ENCODE measurements at regions of chr22 and their contacts with region 1.

Region 1: GRCh38 chr22:21876486-21877176 is 9.2 kb upstream of the MAPK1 start:
- DNase-seq: no peak
- H3K4me3 ChIP-seq: no peak overlapping the region
- H3K27ac ChIP-seq: no peak overlapping the region
- H3K4me1 ChIP-seq: no peaks in the 10 kb centered on the region
- H3K27me3 ChIP-seq: no peaks in the 10 kb centered on the region
- CTCF ChIP-seq: no peak
- POLR2A ChIP-seq: no peak

Region 2: GRCh38 chr22:21754523-21754922 is 122.1 kb before region 1 on chr22:
- intact Hi-C with region 1: loop called (anchors 10 kb)
- DNase-seq: no peak
- H3K4me3 ChIP-seq: no peak overlapping the region
- H3K27ac ChIP-seq: no peak overlapping the region
- H3K4me1 ChIP-seq: no peaks in the 10 kb centered on the region
- H3K27me3 ChIP-seq: no peaks in the 10 kb centered on the region
- CTCF ChIP-seq: no peak
- POLR2A ChIP-seq: no peak

Measured in prostate gland (tissue), 2 donors.